Dorsolateral prefrontal cortex (tissue), 120 donors: ENCODE measurements at regions of chr3 and their contacts with region 1.

Region 1: DNA sequence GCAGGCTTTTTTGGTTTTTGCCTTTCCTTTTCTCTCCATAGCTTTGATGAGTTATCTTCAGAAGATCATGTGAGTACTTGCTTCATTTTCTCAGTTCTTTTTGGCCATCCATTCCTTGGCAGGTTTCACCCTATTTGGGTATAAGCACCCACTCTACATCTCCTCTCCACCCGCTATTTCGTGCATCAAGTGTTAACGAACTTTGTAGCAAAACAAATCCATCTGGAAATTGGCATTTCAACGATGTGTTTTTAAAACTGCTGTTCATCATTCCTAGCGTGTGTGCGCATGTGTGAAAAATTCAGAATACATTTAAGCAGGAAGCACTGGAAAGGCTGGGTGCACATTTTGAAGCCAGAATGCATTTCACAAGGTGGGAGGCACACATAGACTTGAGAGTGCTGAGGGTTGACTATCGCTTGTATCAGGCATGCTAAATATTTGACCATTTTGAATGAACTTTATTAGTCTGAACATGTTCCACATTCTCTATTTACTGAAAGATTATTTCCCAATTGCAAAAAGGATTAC is 89.7 kb upstream of the FHIT start:
- DNase-seq: no peak
- H3K4me3 ChIP-seq: peak overlapping the region in 38 of 59 donors; percentile 2 to 47 (median 25)
- H3K27ac ChIP-seq: peak overlapping the region in 4 of 59 donors; percentile 13 to 44 (median 26)
- H3K27me3 ChIP-seq: no peaks in the 10 kb centered on the region
- CTCF ChIP-seq: no peak

Region 2: GRCh38 chr3:60992395-60992794 is 348.6 kb before region 1 on chr3:
- intact Hi-C with region 1: loop called in 1 of 2 experiments (anchors 10 kb)
- DNase-seq: peak in 1 of 10 donors; percentile 14
- H3K4me3 ChIP-seq: no peak overlapping the region
- H3K27ac ChIP-seq: no peak overlapping the region
- H3K27me3 ChIP-seq: no peaks in the 10 kb centered on the region
- CTCF ChIP-seq: no peak

Region 3: GRCh38 chr3:61561374-61562041 is 220.5 kb after region 1 on chr3 and contains the start of gene PTPRG:
- intact Hi-C with region 1: no loop called
- DNase-seq: peak; percentile 41 to 83 (median 78)
- H3K4me3 ChIP-seq: peak within 1 kb of the TSS; percentile 55 to 88 (median 74)
- H3K27ac ChIP-seq: peak within 1 kb of the TSS in 58 of 59 donors; percentile 58 to 96 (median 91)
- H3K27me3 ChIP-seq: peaks cover 0 to 23% (median 0%) of the 10 kb centered on the region in 45 donors
- CTCF ChIP-seq: peak in 6 of 56 donors; percentile 4 to 17 (median 9)
- total RNA-seq, gene PTPRG: 29.5 to 75.2 (median 50.6) TPM